ENCODE measurements at regions of chr3 and their contacts with region 1.

Region 1: DNA sequence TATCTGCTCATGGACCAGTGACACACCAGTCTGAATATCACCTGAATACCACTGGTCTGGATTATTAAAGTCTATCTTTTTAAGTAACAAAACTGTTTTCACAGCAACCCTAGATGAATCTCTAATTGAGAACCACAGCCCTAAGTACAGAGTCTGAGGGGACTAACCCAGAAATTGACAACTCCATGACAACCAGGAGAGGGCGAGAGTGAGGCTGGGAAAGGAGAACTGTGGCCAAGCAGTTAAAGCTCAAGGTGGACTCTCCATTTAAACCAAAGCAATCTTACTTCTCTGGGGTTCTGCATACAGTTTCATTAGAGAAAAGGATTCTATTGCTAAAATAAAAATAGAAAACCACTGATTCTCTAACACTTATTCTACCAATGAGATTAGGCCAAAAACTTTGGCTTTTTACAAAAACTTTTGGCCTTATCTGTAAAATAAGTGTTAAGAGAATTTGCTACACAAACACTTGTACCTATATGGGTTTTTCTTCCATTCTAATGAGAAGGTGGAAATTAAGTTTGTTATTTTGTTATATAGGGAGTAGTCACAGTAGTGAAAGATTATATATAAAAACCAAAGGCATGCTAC is 11.4 kb downstream of the NEK10 start:
- DNase-seq: peak; percentile 28 to 79 (median 40)
- ATAC-seq: peak; percentile 83
- H3K4me3 ChIP-seq: no peak overlapping the region
- H3K4me3 Mint-ChIP-seq: no peak overlapping the region
- H3K27ac ChIP-seq: no peak overlapping the region
- H3K27ac Mint-ChIP-seq: no peak overlapping the region
- H3K4me1 ChIP-seq: peaks cover 8% of the 10 kb centered on the region
- H3K4me1 Mint-ChIP-seq: peaks cover 39% of the 10 kb centered on the region
- H3K27me3 ChIP-seq: no peaks in the 10 kb centered on the region
- H3K27me3 Mint-ChIP-seq: no peaks in the 10 kb centered on the region
- CTCF ChIP-seq: peak; percentile 73

Region 2: DNA sequence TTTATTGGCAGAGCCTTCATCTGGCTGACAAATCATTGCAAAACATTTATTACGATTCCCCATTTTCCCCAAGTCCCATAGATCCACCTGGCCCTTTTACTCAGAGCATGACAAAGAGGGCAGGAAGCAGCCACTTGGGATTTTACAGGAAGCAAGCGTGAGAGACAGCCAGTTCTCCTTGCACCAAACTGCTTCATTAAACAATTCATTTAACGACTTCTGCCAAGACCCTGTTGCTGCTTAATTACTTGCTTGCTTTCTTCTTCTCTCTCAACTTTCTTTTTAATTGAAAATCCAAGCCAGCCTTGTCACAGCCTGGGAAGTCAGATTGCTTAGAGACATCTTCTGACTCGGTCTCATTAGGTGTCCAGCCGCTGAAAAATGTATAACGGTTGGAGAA is 437.1 kb before region 1 on chr3:
- CTCF ChIA-PET with region 1: no interaction called
- POLR2A ChIA-PET with region 1: no interaction called
- intact Hi-C with region 1: no loop called
- DNase-seq: no peak
- ATAC-seq: no peak
- H3K4me3 ChIP-seq: no peak overlapping the region
- H3K4me3 Mint-ChIP-seq: no peak overlapping the region
- H3K27ac ChIP-seq: no peak overlapping the region
- H3K27ac Mint-ChIP-seq: no peak overlapping the region
- H3K4me1 ChIP-seq: no peaks in the 10 kb centered on the region
- H3K4me1 Mint-ChIP-seq: no peaks in the 10 kb centered on the region
- H3K27me3 ChIP-seq: no peaks in the 10 kb centered on the region
- H3K27me3 Mint-ChIP-seq: no peaks in the 10 kb centered on the region
- CTCF ChIP-seq: no peak

Region 3: GRCh38 chr3:27345492-27345891 is 12.3 kb before region 1 on chr3:
- CTCF ChIA-PET with region 1: interaction called, 10 read pairs
- POLR2A ChIA-PET with region 1: interaction called, 4 read pairs
- intact Hi-C with region 1: no loop called
- DNase-seq: peak in 3 of 14 experiments; percentile 39 to 53 (median 48)
- ATAC-seq: peak; percentile 56
- H3K4me3 ChIP-seq: no peak overlapping the region
- H3K4me3 Mint-ChIP-seq: no peak overlapping the region
- H3K27ac ChIP-seq: no peak overlapping the region
- H3K27ac Mint-ChIP-seq: no peak overlapping the region
- H3K4me1 ChIP-seq: peaks cover 6% of the 10 kb centered on the region
- H3K4me1 Mint-ChIP-seq: peaks cover 5% of the 10 kb centered on the region
- H3K27me3 ChIP-seq: no peaks in the 10 kb centered on the region
- H3K27me3 Mint-ChIP-seq: no peaks in the 10 kb centered on the region
- CTCF ChIP-seq: no peak

Region 4: DNA sequence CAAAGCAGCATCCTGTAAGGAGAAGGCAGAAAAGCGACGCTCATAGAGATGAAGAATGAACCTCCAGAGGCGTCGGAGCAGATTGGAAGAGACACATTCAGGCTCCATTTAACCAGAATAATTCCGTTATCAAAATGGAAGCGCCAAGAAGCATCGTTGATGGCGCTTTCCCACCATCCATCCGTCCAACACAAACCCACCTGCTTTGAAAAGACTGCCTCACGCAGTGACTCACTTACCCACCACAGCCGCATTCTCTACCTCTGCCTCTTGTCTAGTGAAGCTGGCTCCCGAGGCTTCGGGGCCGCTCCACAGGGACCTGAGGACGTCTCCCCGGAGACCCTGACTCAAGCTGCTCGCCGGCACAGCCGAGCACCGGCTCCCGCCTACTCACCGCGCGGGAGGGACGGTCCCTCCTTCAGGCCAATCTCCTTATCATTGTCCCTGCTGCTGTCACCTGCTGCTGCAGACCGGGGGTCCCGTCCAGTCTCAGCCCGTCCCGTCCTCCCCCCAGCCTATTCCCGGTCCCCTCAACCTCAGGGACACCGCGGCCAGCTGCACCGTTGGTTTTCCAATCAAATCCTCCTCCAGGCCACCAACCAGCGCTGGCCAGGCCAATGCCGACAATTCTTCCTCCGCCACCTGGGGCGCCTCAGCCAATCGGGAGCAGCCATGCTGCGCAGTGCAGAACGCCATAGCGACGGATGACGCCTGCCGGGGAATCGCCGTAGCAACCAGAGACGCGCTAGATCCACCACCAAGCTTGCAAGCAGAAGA is 11.3 kb after region 1 on chr3 and contains the start of gene NEK10:
- CTCF ChIA-PET with region 1: interaction called, 14 read pairs
- POLR2A ChIA-PET with region 1: interaction called, 3 read pairs
- intact Hi-C with region 1: no loop called
- DNase-seq: peak; percentile 84 to 96 (median 91)
- ATAC-seq: peak; percentile 96
- H3K4me3 ChIP-seq: peak within 1 kb of the TSS; percentile 73
- H3K4me3 Mint-ChIP-seq: peak within 1 kb of the TSS; percentile 91
- H3K27ac ChIP-seq: no peak within 1 kb of the TSS
- H3K27ac Mint-ChIP-seq: peak within 1 kb of the TSS; percentile 59
- H3K4me1 ChIP-seq: peaks cover 9% of the 10 kb centered on the region
- H3K4me1 Mint-ChIP-seq: peaks cover 15% of the 10 kb centered on the region
- H3K27me3 ChIP-seq: no peaks in the 10 kb centered on the region
- H3K27me3 Mint-ChIP-seq: no peaks in the 10 kb centered on the region
- CTCF ChIP-seq: peak; percentile 13
- total RNA-seq, gene NEK10: 0.61 to 0.77 TPM

Region 5: GRCh38 chr3:27467545-27467944 is 109.8 kb after region 1 on chr3:
- CTCF ChIA-PET with region 1: interaction called, 5 read pairs
- POLR2A ChIA-PET with region 1: interaction called, 5 read pairs
- intact Hi-C with region 1: loop called (anchors 1 to 5 kb)
- DNase-seq: peak in 3 of 14 experiments; percentile 65 to 66 (median 66)
- ATAC-seq: peak; percentile 92
- H3K4me3 ChIP-seq: no peak overlapping the region
- H3K4me3 Mint-ChIP-seq: no peak overlapping the region
- H3K27ac ChIP-seq: no peak overlapping the region
- H3K27ac Mint-ChIP-seq: peak overlapping the region; percentile 31
- H3K4me1 ChIP-seq: no peaks in the 10 kb centered on the region
- H3K4me1 Mint-ChIP-seq: peaks cover 32% of the 10 kb centered on the region
- H3K27me3 ChIP-seq: no peaks in the 10 kb centered on the region
- H3K27me3 Mint-ChIP-seq: no peaks in the 10 kb centered on the region
- CTCF ChIP-seq: peak; percentile 63

Region 6: DNA sequence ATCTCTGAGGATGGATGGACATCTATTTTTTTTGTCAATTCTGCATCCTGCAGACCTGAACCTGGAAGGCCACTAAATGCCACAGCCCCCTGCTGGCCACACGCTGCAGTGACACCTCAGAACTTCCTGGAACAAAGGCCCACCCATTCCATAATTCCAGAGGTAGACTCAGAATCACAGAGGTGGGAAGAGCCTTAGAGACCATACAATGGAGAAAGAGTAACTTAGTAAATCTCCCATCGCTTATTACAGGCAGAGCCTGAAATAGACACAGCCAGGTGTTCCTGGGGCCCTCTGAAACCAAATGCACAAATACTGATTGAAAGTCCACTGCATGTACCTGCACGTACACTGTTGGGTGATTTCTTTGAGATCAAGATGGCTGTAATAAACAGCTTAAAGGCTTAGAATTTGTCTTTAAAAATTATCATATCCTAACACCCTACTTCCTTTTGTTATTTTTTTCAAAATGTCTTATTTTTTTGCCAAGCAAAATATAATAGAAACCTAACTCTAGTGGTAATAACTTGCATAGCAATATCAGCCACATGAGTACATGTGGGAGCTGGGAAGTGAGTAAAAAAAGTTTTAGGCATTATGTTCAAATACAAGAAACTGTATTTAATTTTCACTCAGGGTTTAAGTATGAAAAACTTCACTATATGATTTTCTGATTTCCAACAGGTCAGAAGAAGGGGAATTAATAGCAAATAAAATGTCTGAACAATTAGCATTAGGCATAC is 301.7 kb after region 1 on chr3:
- CTCF ChIA-PET with region 1: no interaction called
- POLR2A ChIA-PET with region 1: no interaction called
- intact Hi-C with region 1: loop called in 1 of 2 experiments (anchors 5 kb)
- DNase-seq: peak; percentile 17 to 68 (median 34)
- ATAC-seq: peak; percentile 58
- H3K4me3 ChIP-seq: no peak overlapping the region
- H3K4me3 Mint-ChIP-seq: no peak overlapping the region
- H3K27ac ChIP-seq: no peak overlapping the region
- H3K27ac Mint-ChIP-seq: no peak overlapping the region
- H3K4me1 ChIP-seq: peaks cover 3% of the 10 kb centered on the region
- H3K4me1 Mint-ChIP-seq: no peaks in the 10 kb centered on the region
- H3K27me3 ChIP-seq: no peaks in the 10 kb centered on the region
- H3K27me3 Mint-ChIP-seq: no peaks in the 10 kb centered on the region
- CTCF ChIP-seq: peak; percentile 96

Region 7: GRCh38 chr3:27681245-27681748 is 323.5 kb after region 1 on chr3:
- CTCF ChIA-PET with region 1: interaction called, 3 read pairs
- POLR2A ChIA-PET with region 1: no interaction called
- intact Hi-C with region 1: loop called in 1 of 2 experiments (anchors 5 kb)
- DNase-seq: peak in 10 of 14 experiments; percentile 8 to 85 (median 28)
- ATAC-seq: peak; percentile 91
- H3K4me3 ChIP-seq: no peak overlapping the region
- H3K4me3 Mint-ChIP-seq: peak overlapping the region; percentile 14
- H3K27ac ChIP-seq: no peak overlapping the region
- H3K27ac Mint-ChIP-seq: no peak overlapping the region
- H3K4me1 ChIP-seq: peaks cover 8% of the 10 kb centered on the region
- H3K4me1 Mint-ChIP-seq: peaks cover 11% of the 10 kb centered on the region
- H3K27me3 ChIP-seq: no peaks in the 10 kb centered on the region
- H3K27me3 Mint-ChIP-seq: peaks cover 9% of the 10 kb centered on the region
- CTCF ChIP-seq: peak; percentile 80

Region 8: GRCh38 chr3:28343144-28343543 is 985.4 kb after region 1 on chr3:
- CTCF ChIA-PET with region 1: no interaction called
- POLR2A ChIA-PET with region 1: no interaction called
- intact Hi-C with region 1: loop called (anchors 5 to 10 kb)
- DNase-seq: no peak
- ATAC-seq: no peak
- H3K4me3 ChIP-seq: no peak overlapping the region
- H3K4me3 Mint-ChIP-seq: no peak overlapping the region
- H3K27ac ChIP-seq: no peak overlapping the region
- H3K27ac Mint-ChIP-seq: no peak overlapping the region
- H3K4me1 ChIP-seq: peaks cover 9% of the 10 kb centered on the region
- H3K4me1 Mint-ChIP-seq: peaks cover 61% of the 10 kb centered on the region
- H3K27me3 ChIP-seq: no peaks in the 10 kb centered on the region
- H3K27me3 Mint-ChIP-seq: no peaks in the 10 kb centered on the region
- CTCF ChIP-seq: no peak